Uterus (tissue), 4 donors: ENCODE measurements at regions of chr4 and their contacts with region 1.

Region 1: GRCh38 chr4:103019308-103020124 is at the start of gene SLC9B1:
- DNase-seq: peak; percentile 96 to 98
- H3K4me3 ChIP-seq: peak within 1 kb of the TSS; percentile 42 to 49
- H3K27ac ChIP-seq: peak within 1 kb of the TSS; percentile 93
- H3K4me1 ChIP-seq: no peaks in the 10 kb centered on the region
- H3K27me3 ChIP-seq: no peaks in the 10 kb centered on the region
- CTCF ChIP-seq: peak in 1 of 4 experiments; percentile 8
- POLR2A ChIP-seq: peak; percentile 69 to 88
- total RNA-seq, gene SLC9B1: 0.59 to 4.8 (median 2.5) TPM in 3 of 4 donors, not detected in the other

Region 2: GRCh38 chr4:102420569-102421221 is 598.8 kb before region 1 on chr4:
- intact Hi-C with region 1: loop called (anchors 10 kb)
- DNase-seq: no peak
- H3K4me3 ChIP-seq: no peak overlapping the region
- H3K27ac ChIP-seq: no peak overlapping the region
- H3K4me1 ChIP-seq: no peaks in the 10 kb centered on the region
- H3K27me3 ChIP-seq: no peaks in the 10 kb centered on the region
- CTCF ChIP-seq: peak in 3 of 4 experiments; percentile 26 to 61 (median 32)
- POLR2A ChIP-seq: no peak

Region 3: GRCh38 chr4:102918859-102919258 is 100.7 kb before region 1 on chr4:
- intact Hi-C with region 1: no loop called
- DNase-seq: no peak
- H3K4me3 ChIP-seq: no peak overlapping the region
- H3K27ac ChIP-seq: no peak overlapping the region
- H3K4me1 ChIP-seq: no peaks in the 10 kb centered on the region
- H3K27me3 ChIP-seq: no peaks in the 10 kb centered on the region
- CTCF ChIP-seq: no peak
- POLR2A ChIP-seq: no peak

Region 4: GRCh38 chr4:103099691-103100392 is 80.3 kb after region 1 on chr4 and contains the start of gene BDH2:
- intact Hi-C with region 1: loop called (anchors 10 kb)
- DNase-seq: peak; percentile 41 to 78
- H3K4me3 ChIP-seq: peak within 1 kb of the TSS; percentile 34 to 43
- H3K27ac ChIP-seq: peak within 1 kb of the TSS; percentile 73 to 85
- H3K4me1 ChIP-seq: no peaks in the 10 kb centered on the region
- H3K27me3 ChIP-seq: no peaks in the 10 kb centered on the region
- CTCF ChIP-seq: peak; percentile 75 to 90 (median 82)
- POLR2A ChIP-seq: peak; percentile 49 to 66
- total RNA-seq, gene BDH2: 39.7 to 96.7 (median 78.1) TPM

Region 5: DNA sequence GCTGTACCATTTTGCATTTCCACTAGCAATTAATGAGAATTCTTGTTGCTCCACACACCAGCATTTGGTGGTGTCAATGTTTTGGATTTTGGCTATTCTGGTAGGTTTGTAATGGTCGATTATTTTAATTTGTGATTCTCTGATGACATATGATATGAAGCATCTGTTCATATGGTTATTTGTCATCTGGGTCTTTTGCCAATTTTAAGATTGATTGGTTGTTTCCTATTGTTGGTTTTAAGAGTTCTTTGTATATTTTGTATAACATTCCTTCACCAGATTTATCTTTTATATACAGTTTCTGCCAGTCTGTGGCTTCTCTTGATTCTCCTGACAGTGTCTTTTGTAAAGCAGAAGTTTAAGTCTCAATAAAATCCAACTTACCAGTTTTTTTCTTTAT is 98.7 kb after region 1 on chr4:
- intact Hi-C with region 1: no loop called
- DNase-seq: no peak
- H3K4me3 ChIP-seq: no peak overlapping the region
- H3K27ac ChIP-seq: no peak overlapping the region
- H3K4me1 ChIP-seq: no peaks in the 10 kb centered on the region
- H3K27me3 ChIP-seq: no peaks in the 10 kb centered on the region
- CTCF ChIP-seq: no peak
- POLR2A ChIP-seq: no peak